WTC11 (cell line): ENCODE measurements at regions of chr9 and their contacts with region 1.

Region 1: DNA sequence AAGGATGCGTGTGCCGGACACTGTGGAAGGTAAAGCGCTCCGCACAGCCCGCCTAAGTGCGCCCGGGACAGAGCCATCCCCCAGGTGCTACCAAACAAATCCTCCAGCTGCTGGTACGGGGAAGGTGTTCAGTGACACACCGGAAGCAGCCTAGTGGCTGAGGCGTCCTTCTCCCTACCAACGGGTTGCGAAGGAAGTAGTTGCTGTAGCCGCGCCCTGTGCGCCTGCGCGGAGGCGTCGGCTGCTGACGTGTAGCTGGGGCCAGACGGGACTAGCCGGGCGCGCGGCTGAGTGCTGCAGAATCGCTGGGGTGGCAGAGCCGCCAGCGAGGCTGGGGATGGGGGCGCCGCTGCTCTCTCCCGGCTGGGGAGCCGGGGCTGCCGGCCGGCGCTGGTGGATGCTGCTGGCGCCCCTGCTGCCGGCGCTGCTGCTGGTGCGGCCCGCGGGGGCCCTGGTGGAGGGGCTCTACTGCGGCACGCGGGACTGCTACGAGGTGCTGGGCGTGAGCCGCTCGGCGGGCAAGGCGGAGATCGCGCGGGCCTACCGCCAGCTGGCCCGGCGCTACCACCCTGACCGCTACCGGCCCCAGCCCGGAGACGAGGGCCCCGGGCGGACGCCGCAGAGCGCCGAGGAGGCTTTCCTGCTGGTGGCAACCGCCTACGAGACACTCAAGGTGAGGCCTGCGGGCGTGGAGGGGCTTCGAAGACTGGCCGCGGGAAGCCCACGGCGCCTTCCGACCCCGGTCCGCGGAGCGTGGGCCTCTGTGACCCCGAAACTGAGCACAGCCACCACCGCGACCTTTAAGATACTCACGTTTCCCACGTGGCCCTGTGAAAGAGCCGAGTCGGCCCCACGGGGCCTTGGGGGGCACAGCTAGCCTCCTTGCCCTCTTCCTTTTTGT is at the start of gene DNAJC25:
- DNase-seq: peak; percentile 98
- ATAC-seq: peak; percentile 93
- H3K4me3 Mint-ChIP-seq: peak within 1 kb of the TSS; percentile 99
- H3K27ac Mint-ChIP-seq: peak within 1 kb of the TSS; percentile 98
- H3K4me1 Mint-ChIP-seq: peaks cover 33% of the 10 kb centered on the region
- H3K27me3 Mint-ChIP-seq: no peaks in the 10 kb centered on the region; the same call in 1 of the 2 replicates
- CTCF ChIP-seq: no peak
- total RNA-seq, gene DNAJC25: 6.1 to 7.4 TPM (median 6.8 TPM) in 3 replicates

Region 2: GRCh38 chr9:111559000-111559610 is 72.2 kb before region 1 on chr9:
- CTCF ChIA-PET with region 1: no interaction called
- POLR2A ChIA-PET with region 1: no interaction called
- DNase-seq: no peak
- ATAC-seq: peak; percentile 42
- H3K4me3 Mint-ChIP-seq: no peak overlapping the region
- H3K27ac Mint-ChIP-seq: no peak overlapping the region
- H3K4me1 Mint-ChIP-seq: no peaks in the 10 kb centered on the region
- H3K27me3 Mint-ChIP-seq: no peaks in the 10 kb centered on the region
- CTCF ChIP-seq: no peak

Region 3: GRCh38 chr9:111661150-111661801 is 30.0 kb after region 1 on chr9 and contains the start of gene GNG10:
- CTCF ChIA-PET with region 1: no interaction called
- POLR2A ChIA-PET with region 1: interaction called, 11 read pairs
- DNase-seq: peak; percentile 52
- ATAC-seq: peak; percentile 74
- H3K4me3 Mint-ChIP-seq: peak within 1 kb of the TSS; percentile 94
- H3K27ac Mint-ChIP-seq: peak within 1 kb of the TSS; percentile 66
- H3K4me1 Mint-ChIP-seq: peaks cover 23% of the 10 kb centered on the region
- H3K27me3 Mint-ChIP-seq: peaks cover 13% of the 10 kb centered on the region
- CTCF ChIP-seq: no peak
- total RNA-seq, gene GNG10: 17.2 to 25.3 TPM (median 22.1 TPM) in 3 replicates